CD4-positive, alpha-beta memory T cell (primary cell): ENCODE measurements at regions of chr5 and their contacts with region 1.

Region 1: GRCh38 chr5:111278845-111279504 is 54.8 kb downstream of the CAMK4 start:
- DNase-seq: peak; percentile 77 to 84 (median 82)
- H3K4me3 ChIP-seq: no peak overlapping the region
- H3K4me3 Mint-ChIP-seq: peak overlapping the region in 3 of 8 donors; percentile 27 to 75 (median 63)
- H3K27ac ChIP-seq: no peak overlapping the region
- H3K27ac Mint-ChIP-seq: peak overlapping the region in 6 of 7 donors; percentile 53 to 94 (median 82)
- H3K4me1 ChIP-seq: peaks cover 57% of the 10 kb centered on the region
- H3K4me1 Mint-ChIP-seq: peaks cover 52 to 79% (median 64%) of the 10 kb centered on the region in 4 donors
- H3K27me3 ChIP-seq: no peaks in the 10 kb centered on the region
- H3K27me3 Mint-ChIP-seq: no peaks in the 10 kb centered on the region

Region 2: GRCh38 chr5:111172504-111172903 is 106.5 kb before region 1 on chr5:
- CTCF ChIA-PET with region 1: interaction called, 11 read pairs
- POLR2A ChIA-PET with region 1: interaction called, 3 read pairs
- intact Hi-C with region 1: no loop called
- DNase-seq: peak in 2 of 5 donors; percentile 7 to 13
- H3K4me3 ChIP-seq: no peak overlapping the region
- H3K4me3 Mint-ChIP-seq: no peak overlapping the region
- H3K27ac ChIP-seq: no peak overlapping the region
- H3K27ac Mint-ChIP-seq: no peak overlapping the region
- H3K4me1 ChIP-seq: no peaks in the 10 kb centered on the region
- H3K4me1 Mint-ChIP-seq: peaks cover 0 to 2% (median 0%) of the 10 kb centered on the region in 4 donors
- H3K27me3 ChIP-seq: no peaks in the 10 kb centered on the region
- H3K27me3 Mint-ChIP-seq: no peaks in the 10 kb centered on the region

Region 3: DNA sequence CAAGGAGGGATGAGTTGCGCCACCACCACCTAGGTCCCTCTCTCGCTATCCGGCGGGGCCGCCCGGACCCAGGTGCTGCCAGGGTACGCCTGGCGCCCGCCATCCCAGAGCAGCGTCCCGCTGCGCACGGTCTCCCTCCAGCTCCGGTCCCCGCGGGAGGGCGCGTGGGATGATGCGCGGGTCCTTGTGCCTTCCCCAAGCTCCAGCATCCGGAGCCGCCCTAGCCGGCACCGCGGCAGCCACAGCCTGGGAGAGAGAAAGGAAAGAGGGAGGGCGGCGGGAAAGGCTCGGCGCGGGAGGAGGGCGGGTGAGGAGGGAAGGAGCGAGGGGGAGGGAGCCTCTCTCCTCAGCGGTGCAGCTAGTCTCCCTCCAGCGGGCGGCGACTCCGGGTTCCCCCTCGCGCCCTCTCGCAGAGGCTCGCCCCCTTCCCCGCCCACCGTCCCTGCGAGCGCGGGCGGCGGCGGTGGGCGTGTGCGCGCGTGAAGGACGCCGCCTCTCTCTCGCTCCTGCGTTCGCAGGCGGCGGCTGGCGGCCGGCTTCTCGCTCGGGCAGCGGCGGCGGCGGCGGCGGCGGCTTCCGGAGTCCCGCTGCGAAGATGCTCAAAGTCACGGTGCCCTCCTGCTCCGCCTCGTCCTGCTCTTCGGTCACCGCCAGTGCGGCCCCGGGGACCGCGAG is 54.9 kb before region 1 on chr5 and contains the start of gene CAMK4:
- CTCF ChIA-PET with region 1: interaction called, 127 read pairs
- POLR2A ChIA-PET with region 1: interaction called, 43 read pairs
- intact Hi-C with region 1: loop called (anchors 1 kb)
- DNase-seq: peak; percentile 83 to 87 (median 84)
- H3K4me3 ChIP-seq: peak within 1 kb of the TSS; percentile 74 to 87
- H3K4me3 Mint-ChIP-seq: peak within 1 kb of the TSS; percentile 94 to 98 (median 96)
- H3K27ac ChIP-seq: peak within 1 kb of the TSS; percentile 82
- H3K27ac Mint-ChIP-seq: peak within 1 kb of the TSS; percentile 88 to 97 (median 94)
- H3K4me1 ChIP-seq: peaks cover 34% of the 10 kb centered on the region
- H3K4me1 Mint-ChIP-seq: peaks cover 19 to 51% (median 30%) of the 10 kb centered on the region in 4 donors
- H3K27me3 ChIP-seq: no peaks in the 10 kb centered on the region
- H3K27me3 Mint-ChIP-seq: no peaks in the 10 kb centered on the region
- total RNA-seq, gene CAMK4: 243 to 257 TPM

Region 4: GRCh38 chr5:111248571-111248970 is 30.4 kb before region 1 on chr5:
- CTCF ChIA-PET with region 1: interaction called, 24 read pairs
- POLR2A ChIA-PET with region 1: interaction called, 4 read pairs
- intact Hi-C with region 1: no loop called
- DNase-seq: no peak
- H3K4me3 ChIP-seq: no peak overlapping the region
- H3K4me3 Mint-ChIP-seq: peak overlapping the region in 4 of 8 donors; percentile 11 to 59 (median 53)
- H3K27ac ChIP-seq: no peak overlapping the region
- H3K27ac Mint-ChIP-seq: peak overlapping the region; percentile 7 to 81 (median 44)
- H3K4me1 ChIP-seq: peaks cover 78% of the 10 kb centered on the region
- H3K4me1 Mint-ChIP-seq: peaks cover 63 to 80% (median 72%) of the 10 kb centered on the region in 4 donors
- H3K27me3 ChIP-seq: no peaks in the 10 kb centered on the region
- H3K27me3 Mint-ChIP-seq: no peaks in the 10 kb centered on the region

Region 5: DNA sequence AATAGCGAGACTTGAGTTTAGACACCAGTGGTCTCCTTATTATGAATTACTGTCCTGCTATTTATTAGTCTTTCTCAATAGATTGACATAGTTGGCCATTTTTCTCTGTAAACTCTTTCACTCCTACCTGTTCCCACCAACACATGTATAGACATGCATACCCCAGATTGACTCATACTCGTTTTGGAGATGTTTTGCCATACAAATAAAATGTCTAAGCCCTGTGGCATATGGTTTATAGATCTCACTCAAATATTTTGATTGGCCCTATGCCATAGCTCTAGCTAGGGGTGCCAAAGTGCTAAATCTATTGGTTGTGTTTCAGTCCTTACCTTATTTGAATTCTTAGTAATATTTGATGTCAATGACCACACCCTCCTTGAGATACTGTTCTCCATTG is 12.5 kb before region 1 on chr5:
- CTCF ChIA-PET with region 1: interaction called, 30 read pairs
- POLR2A ChIA-PET with region 1: no interaction called
- intact Hi-C with region 1: no loop called
- DNase-seq: no peak
- H3K4me3 ChIP-seq: no peak overlapping the region
- H3K4me3 Mint-ChIP-seq: peak overlapping the region in 1 of 8 donors; percentile 2
- H3K27ac ChIP-seq: no peak overlapping the region
- H3K27ac Mint-ChIP-seq: peak overlapping the region in 2 of 7 donors; percentile 28 to 62
- H3K4me1 ChIP-seq: peaks cover 51% of the 10 kb centered on the region
- H3K4me1 Mint-ChIP-seq: peaks cover 36 to 71% (median 51%) of the 10 kb centered on the region in 4 donors
- H3K27me3 ChIP-seq: no peaks in the 10 kb centered on the region
- H3K27me3 Mint-ChIP-seq: no peaks in the 10 kb centered on the region